GM12878 (cell line): ENCODE measurements at regions of chr15 and their contacts with region 1.

Region 1: GRCh38 chr15:75367913-75368688 is at the start of gene MAN2C1:
- DNase-seq: peak; percentile 95
- ATAC-seq: peak; percentile 95
- H3K4me3 ChIP-seq: peak within 1 kb of the TSS; percentile 75
- H3K27ac ChIP-seq: peak within 1 kb of the TSS; percentile 91
- H3K4me1 ChIP-seq: peaks cover 6% of the 10 kb centered on the region
- H3K27me3 ChIP-seq: no peaks in the 10 kb centered on the region
- CTCF ChIP-seq: peak; percentile 81 to 95 (median 87)
- EP300 ChIP-seq: no peak
- POLR2A ChIP-seq: peak; percentile 97
- RAD21 ChIP-seq: peak; percentile 73
- polyA plus RNA-seq, gene MAN2C1: 1.4 to 4.6 TPM

Region 2: DNA sequence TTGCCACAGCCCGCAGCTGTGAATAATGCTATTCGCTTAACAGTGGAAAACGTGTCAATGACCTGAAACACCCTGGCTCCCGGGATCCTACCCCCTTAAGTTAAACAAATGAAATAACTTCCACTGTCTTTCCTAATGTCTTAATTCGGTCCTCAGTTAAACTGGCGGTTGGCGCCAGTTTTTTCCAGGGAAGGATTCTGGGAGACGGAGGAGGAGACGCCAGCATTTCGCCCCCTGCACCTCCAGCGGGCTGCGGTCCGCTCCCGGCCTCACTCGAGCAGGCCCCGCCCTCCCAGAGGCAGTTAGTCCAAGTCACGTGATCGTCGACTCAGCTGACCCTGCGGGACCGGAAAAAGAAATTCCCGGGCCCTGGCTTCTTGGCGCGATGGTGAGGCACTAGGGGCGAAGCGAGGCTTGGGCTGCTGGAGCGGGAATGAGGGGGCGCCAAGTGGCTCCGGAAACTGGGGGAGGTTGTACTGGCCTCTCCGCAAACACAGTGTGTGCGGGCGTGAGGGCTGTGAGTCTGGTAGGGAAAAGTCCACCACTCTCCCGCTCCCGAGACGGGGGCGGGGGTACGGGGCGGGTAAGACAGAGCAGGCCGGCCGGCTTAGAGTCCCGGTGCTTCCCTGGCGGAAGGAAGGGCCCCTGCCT is 32.3 kb before region 1 on chr15 and contains the start of gene COMMD4:
- CTCF ChIA-PET with region 1: interaction called, 15 read pairs
- POLR2A ChIA-PET with region 1: interaction called, 7 read pairs
- RAD21 ChIA-PET with region 1: interaction called, 8 read pairs
- SMC1A ChIA-PET with region 1: interaction called, 6 read pairs
- in situ Hi-C with region 1: no loop called
- intact Hi-C with region 1: no loop called
- DNase-seq: no peak
- ATAC-seq: peak; percentile 86
- H3K4me3 ChIP-seq: peak within 1 kb of the TSS; percentile 96
- H3K27ac ChIP-seq: peak within 1 kb of the TSS; percentile 63
- H3K4me1 ChIP-seq: no peaks in the 10 kb centered on the region; the same call in 1 of the 2 replicates
- H3K27me3 ChIP-seq: no peaks in the 10 kb centered on the region
- CTCF ChIP-seq: no peak
- EP300 ChIP-seq: no peak
- POLR2A ChIP-seq: peak; percentile 40
- RAD21 ChIP-seq: no peak
- polyA plus RNA-seq, gene COMMD4: 14.5 to 38.4 TPM

Region 3: DNA sequence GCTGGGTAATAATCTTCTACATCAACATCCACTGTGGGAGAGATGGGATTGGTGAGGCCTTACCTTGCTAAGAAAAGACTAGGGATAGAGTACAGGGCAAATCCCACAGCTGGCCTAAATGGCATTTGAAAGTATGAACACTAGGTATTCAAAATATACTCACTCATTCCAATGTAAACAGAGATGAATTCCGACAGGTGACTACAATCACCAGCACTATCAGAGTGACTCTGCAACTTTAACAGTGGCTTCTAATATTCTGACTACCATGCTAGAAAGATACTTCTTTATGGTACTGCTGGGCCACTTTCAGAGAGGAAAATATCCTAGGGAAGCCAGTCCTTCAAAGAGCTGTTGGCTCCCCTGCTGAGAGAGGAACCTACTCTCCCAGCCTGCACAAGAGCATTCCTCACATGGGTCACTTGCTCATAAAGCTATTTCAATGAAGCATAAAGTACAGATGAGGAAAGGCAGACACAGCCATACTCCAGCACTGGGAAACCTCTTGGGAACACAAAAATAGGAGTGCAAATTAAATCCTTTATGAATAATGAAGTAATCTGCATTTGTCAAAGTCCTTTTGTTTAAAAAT is 21.8 kb after region 1 on chr15:
- CTCF ChIA-PET with region 1: interaction called, 10 read pairs
- POLR2A ChIA-PET with region 1: interaction called, 13 read pairs
- RAD21 ChIA-PET with region 1: interaction called, 4 read pairs
- SMC1A ChIA-PET with region 1: interaction called, 11 read pairs
- in situ Hi-C with region 1: no loop called
- intact Hi-C with region 1: no loop called
- DNase-seq: no peak
- ATAC-seq: no peak
- H3K4me3 ChIP-seq: no peak overlapping the region
- H3K27ac ChIP-seq: no peak overlapping the region
- H3K4me1 ChIP-seq: peaks cover 5% of the 10 kb centered on the region
- H3K27me3 ChIP-seq: no peaks in the 10 kb centered on the region
- CTCF ChIP-seq: no peak
- EP300 ChIP-seq: no peak
- POLR2A ChIP-seq: no peak
- RAD21 ChIP-seq: no peak

Region 4: DNA sequence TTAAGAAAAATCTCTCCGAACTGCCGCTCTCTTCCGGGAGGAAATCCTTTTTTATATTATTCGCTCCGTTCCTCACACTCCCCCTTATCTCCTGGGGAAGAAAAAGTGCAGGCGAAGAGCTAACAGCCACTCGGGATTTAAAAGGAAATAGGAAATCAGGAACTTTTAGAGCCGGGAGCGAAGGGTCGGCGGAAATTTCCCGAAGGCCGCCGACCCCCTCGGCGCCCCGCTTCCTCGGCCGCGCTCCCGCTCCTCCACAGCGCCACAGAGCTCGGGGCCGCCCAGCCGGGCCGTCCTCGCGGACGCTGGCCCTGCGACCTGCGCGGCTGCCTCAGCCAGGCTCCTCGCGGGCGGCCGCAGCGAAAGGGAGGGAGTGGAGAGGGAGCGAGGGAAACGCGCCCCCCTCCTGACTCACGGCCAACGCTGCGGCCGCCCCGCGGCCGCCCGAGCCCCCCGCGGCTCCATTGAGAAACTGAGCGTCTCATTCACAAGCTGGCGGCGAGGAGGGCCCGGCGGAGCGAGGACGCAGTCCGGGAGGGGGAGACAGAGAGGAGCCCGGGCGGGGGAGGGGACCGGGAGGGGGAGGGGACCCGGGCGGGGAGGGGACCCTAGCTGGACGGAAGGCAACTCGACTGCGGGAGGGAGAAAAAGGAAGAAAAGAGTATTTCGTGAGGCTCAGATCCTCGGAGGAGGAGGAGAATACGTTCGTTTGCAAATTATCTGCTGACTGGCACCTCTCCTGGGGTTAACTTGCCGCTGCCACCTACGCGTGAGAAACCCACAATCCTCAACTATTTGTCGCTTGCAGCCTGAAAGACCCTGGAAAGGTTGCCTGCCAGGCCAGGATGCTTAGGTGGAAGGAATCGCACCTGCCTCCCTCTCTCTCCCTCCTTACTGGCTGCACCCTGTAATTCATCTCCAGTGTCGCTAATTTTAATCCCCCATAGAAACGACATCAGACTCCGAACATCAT is 211.1 kb after region 1 on chr15 and contains the start of gene PTPN9:
- CTCF ChIA-PET with region 1: interaction called, 14 read pairs
- POLR2A ChIA-PET with region 1: interaction called, 4 read pairs
- RAD21 ChIA-PET with region 1: interaction called, 18 read pairs
- SMC1A ChIA-PET with region 1: no interaction called
- in situ Hi-C with region 1: no loop called
- intact Hi-C with region 1: no loop called
- DNase-seq: no peak
- ATAC-seq: peak; percentile 84
- H3K4me3 ChIP-seq: peak within 1 kb of the TSS; percentile 86
- H3K27ac ChIP-seq: peak within 1 kb of the TSS; percentile 79
- H3K4me1 ChIP-seq: peaks cover 3% of the 10 kb centered on the region; the same call in 1 of the 2 replicates
- H3K27me3 ChIP-seq: no peaks in the 10 kb centered on the region
- CTCF ChIP-seq: peak; percentile 23 to 46 (median 33); a peak in 5 of 6 replicates
- EP300 ChIP-seq: no peak
- POLR2A ChIP-seq: peak; percentile 76
- RAD21 ChIP-seq: no peak
- polyA plus RNA-seq, gene PTPN9: 7.8 to 8.9 TPM

Region 5: GRCh38 chr15:75647370-75648155 is 279.5 kb after region 1 on chr15 and contains the start of gene SNX33:
- CTCF ChIA-PET with region 1: interaction called, 86 read pairs
- POLR2A ChIA-PET with region 1: interaction called, 34 read pairs
- RAD21 ChIA-PET with region 1: interaction called, 10 read pairs
- SMC1A ChIA-PET with region 1: interaction called, 24 read pairs
- in situ Hi-C with region 1: no loop called
- intact Hi-C with region 1: no loop called
- DNase-seq: no peak
- ATAC-seq: peak; percentile 81
- H3K4me3 ChIP-seq: peak within 1 kb of the TSS; percentile 91
- H3K27ac ChIP-seq: no peak within 1 kb of the TSS
- H3K4me1 ChIP-seq: 0 out of 2 replicates have a peak, but pooled peaks cover 2% of the 10 kb centered on the region
- H3K27me3 ChIP-seq: peaks cover 0 to 2% of the 10 kb centered on the region in 2 experiments; a peak in 2 of 4 replicates
- CTCF ChIP-seq: peak; percentile 34 to 61 (median 57)
- EP300 ChIP-seq: 0 out of 4 replicates have a peak, but pooled peaks of 1 of the 2 experiments have one; percentile 23
- POLR2A ChIP-seq: peak; percentile 49; the same call in 1 of the 2 replicates
- RAD21 ChIP-seq: peak; percentile 7; the same call in 1 of the 2 replicates
- polyA plus RNA-seq, gene SNX33: 0.13 to 0.14 TPM

Region 6: GRCh38 chr15:75801859-75802593 is 433.9 kb after region 1 on chr15:
- CTCF ChIA-PET with region 1: interaction called, 28 read pairs
- POLR2A ChIA-PET with region 1: no interaction called
- RAD21 ChIA-PET with region 1: interaction called, 4 read pairs
- SMC1A ChIA-PET with region 1: no interaction called
- in situ Hi-C with region 1: no loop called
- intact Hi-C with region 1: no loop called
- DNase-seq: no peak
- ATAC-seq: peak; percentile 100
- H3K4me3 ChIP-seq: no peak overlapping the region
- H3K27ac ChIP-seq: no peak overlapping the region
- H3K4me1 ChIP-seq: no peaks in the 10 kb centered on the region
- H3K27me3 ChIP-seq: peaks cover 1 to 2% of the 10 kb centered on the region in 2 experiments; a peak in 2 of 4 replicates
- CTCF ChIP-seq: peak; percentile 66 to 93 (median 80)
- EP300 ChIP-seq: no peak
- POLR2A ChIP-seq: no peak
- RAD21 ChIP-seq: peak; percentile 88